ENCODE measurements at regions of chr1 and their contacts with region 1.

Region 1: GRCh38 chr1:111707906-111708305 is 31.3 kb downstream of the INKA2 start:
- DNase-seq: no peak
- ATAC-seq: no peak
- H3K4me3 ChIP-seq: no peak overlapping the region
- H3K4me3 Mint-ChIP-seq: no peak overlapping the region
- H3K27ac ChIP-seq: no peak overlapping the region
- H3K27ac Mint-ChIP-seq: no peak overlapping the region
- H3K4me1 ChIP-seq: no peaks in the 10 kb centered on the region
- H3K4me1 Mint-ChIP-seq: peaks cover 4% of the 10 kb centered on the region
- H3K27me3 ChIP-seq: no peaks in the 10 kb centered on the region
- H3K27me3 Mint-ChIP-seq: no peaks in the 10 kb centered on the region
- CTCF ChIP-seq: no peak

Region 2: GRCh38 chr1:111690306-111690617 is 17.6 kb before region 1 on chr1:
- CTCF ChIA-PET with region 1: no interaction called
- POLR2A ChIA-PET with region 1: interaction called, 3 read pairs
- intact Hi-C with region 1: loop called in 1 of 2 experiments (anchors 2 kb)
- DNase-seq: no peak
- ATAC-seq: no peak
- H3K4me3 ChIP-seq: no peak overlapping the region
- H3K4me3 Mint-ChIP-seq: no peak overlapping the region
- H3K27ac ChIP-seq: no peak overlapping the region
- H3K27ac Mint-ChIP-seq: peak overlapping the region; percentile 62
- H3K4me1 ChIP-seq: peaks cover 7% of the 10 kb centered on the region
- H3K4me1 Mint-ChIP-seq: peaks cover 70% of the 10 kb centered on the region
- H3K27me3 ChIP-seq: no peaks in the 10 kb centered on the region
- H3K27me3 Mint-ChIP-seq: no peaks in the 10 kb centered on the region
- CTCF ChIP-seq: no peak

Region 3: DNA sequence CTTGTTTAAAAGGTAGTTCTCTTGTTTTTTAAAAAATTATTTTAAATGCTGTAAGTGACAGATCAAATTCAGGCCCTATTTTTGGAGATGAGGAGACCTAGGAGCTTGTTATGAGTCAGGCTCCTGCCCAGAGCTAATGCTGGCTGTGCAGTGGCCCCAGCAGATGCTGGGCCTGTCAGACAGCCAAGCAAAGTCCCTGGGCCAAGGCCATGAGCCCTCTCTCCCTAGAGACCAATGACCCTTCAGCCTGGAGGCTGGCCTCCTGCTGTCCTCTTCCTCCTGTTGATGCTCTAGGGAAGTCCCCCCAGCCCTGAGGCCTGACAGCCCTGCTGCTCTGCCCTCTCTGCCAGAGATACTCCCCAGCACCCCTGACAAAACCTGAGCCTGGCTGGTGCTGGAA is 560.0 kb after region 1 on chr1:
- CTCF ChIA-PET with region 1: no interaction called
- POLR2A ChIA-PET with region 1: no interaction called
- intact Hi-C with region 1: no loop called
- DNase-seq: no peak
- ATAC-seq: no peak
- H3K4me3 ChIP-seq: no peak overlapping the region
- H3K4me3 Mint-ChIP-seq: no peak overlapping the region
- H3K27ac ChIP-seq: no peak overlapping the region
- H3K27ac Mint-ChIP-seq: no peak overlapping the region
- H3K4me1 ChIP-seq: no peaks in the 10 kb centered on the region
- H3K4me1 Mint-ChIP-seq: no peaks in the 10 kb centered on the region
- H3K27me3 ChIP-seq: peaks cover 0 to 3% of the 10 kb centered on the region in 2 experiments
- H3K27me3 Mint-ChIP-seq: peaks cover 18% of the 10 kb centered on the region
- CTCF ChIP-seq: no peak